GM12878 (cell line): ENCODE measurements at regions of chr15 and their contacts with region 1.

Region 1: GRCh38 chr15:74307827-74308644 is 59.4 kb downstream of the CYP11A1 start:
- DNase-seq: no peak
- ATAC-seq: peak; percentile 89
- H3K4me3 ChIP-seq: no peak overlapping the region
- H3K27ac ChIP-seq: no peak overlapping the region
- H3K4me1 ChIP-seq: no peaks in the 10 kb centered on the region
- H3K27me3 ChIP-seq: peaks cover 0 to 2% of the 10 kb centered on the region in 2 experiments; a peak in 2 of 4 replicates
- CTCF ChIP-seq: peak; percentile 68 to 79 (median 75)
- EP300 ChIP-seq: no peak
- POLR2A ChIP-seq: no peak
- RAD21 ChIP-seq: peak; percentile 94

Region 2: DNA sequence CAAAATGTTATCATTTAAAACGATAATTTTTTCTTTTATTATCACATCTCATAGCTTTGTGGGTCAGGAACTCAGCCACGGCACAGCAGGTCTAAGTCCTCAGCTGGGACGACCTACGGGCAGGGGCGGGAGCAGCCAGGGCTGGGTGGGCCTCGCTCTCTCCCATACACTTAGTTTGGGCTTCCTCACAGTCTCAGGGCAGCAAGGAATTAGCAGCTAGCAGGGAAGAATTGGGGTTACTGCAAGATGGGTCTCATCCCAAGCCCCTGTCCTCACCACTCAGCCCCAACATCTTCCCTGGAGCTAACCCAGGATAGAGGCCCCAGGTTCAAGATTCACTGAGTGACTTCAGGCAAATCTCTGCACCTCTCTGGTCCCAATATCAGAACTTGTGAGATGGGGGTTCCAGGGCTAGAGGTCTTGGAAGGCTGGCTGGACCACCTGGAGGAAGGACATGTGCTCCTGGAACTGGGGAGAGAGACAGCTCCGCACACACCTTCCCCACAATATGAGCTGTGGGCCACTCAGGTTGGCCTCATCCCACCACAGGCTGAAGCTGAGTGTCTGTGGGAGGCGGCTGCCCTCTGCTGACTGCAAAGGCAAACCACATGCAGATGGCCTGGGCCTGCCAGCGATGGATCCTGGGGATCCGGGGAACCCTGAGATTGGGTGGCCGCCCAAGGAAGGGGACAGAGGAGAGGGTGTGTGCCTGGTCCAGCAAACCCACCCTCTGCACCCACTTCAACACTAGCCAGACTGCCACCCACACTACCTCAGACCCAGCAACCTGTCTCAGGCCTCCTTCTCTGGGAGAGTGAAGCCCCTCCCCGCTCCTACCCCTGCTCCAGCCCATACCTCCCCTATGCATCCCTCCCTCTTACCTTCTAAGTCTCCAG is 14.4 kb after region 1 on chr15:
- CTCF ChIA-PET with region 1: interaction called, 147 read pairs
- POLR2A ChIA-PET with region 1: no interaction called
- RAD21 ChIA-PET with region 1: interaction called, 12 read pairs
- SMC1A ChIA-PET with region 1: interaction called, 23 read pairs
- in situ Hi-C with region 1: no loop called
- intact Hi-C with region 1: no loop called
- DNase-seq: no peak
- ATAC-seq: peak; percentile 95
- H3K4me3 ChIP-seq: no peak overlapping the region
- H3K27ac ChIP-seq: no peak overlapping the region
- H3K4me1 ChIP-seq: peaks cover 30% of the 10 kb centered on the region
- H3K27me3 ChIP-seq: no peaks in the 10 kb centered on the region
- CTCF ChIP-seq: peak; percentile 94 to 96 (median 94)
- EP300 ChIP-seq: no peak
- POLR2A ChIP-seq: no peak
- RAD21 ChIP-seq: peak; percentile 91

Region 3: DNA sequence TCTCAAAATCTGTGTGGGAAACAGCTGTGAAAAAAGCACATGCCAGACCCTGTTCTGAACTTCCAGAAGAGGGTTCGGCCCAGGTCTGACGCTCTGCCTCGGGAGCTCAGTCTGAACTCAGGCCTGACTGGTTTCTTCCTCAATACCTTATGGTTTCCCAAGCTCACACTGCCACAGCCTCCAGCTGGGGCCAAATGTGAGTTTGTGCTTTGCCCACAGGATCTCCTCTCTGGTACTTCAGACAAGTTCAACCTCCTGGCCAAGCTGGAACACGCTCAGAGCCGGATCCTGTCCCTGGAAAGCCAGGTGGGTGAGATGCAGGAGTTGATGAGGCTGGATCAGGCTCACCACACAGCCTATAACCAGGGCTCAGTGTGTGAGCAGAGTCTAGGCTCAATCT is 25.6 kb after region 1 on chr15:
- CTCF ChIA-PET with region 1: no interaction called
- POLR2A ChIA-PET with region 1: no interaction called
- RAD21 ChIA-PET with region 1: no interaction called
- SMC1A ChIA-PET with region 1: no interaction called
- in situ Hi-C with region 1: no loop called
- intact Hi-C with region 1: no loop called
- DNase-seq: no peak
- ATAC-seq: no peak
- H3K4me3 ChIP-seq: no peak overlapping the region
- H3K27ac ChIP-seq: no peak overlapping the region
- H3K4me1 ChIP-seq: no peaks in the 10 kb centered on the region
- H3K27me3 ChIP-seq: no peaks in the 10 kb centered on the region
- CTCF ChIP-seq: no peak
- EP300 ChIP-seq: no peak
- POLR2A ChIP-seq: no peak
- RAD21 ChIP-seq: no peak